ENCODE measurements at regions of chr2 and their contacts with region 1.

Region 1: GRCh38 chr2:60818272-60818671 is 62.2 kb downstream of the PAPOLG start:
- DNase-seq: peak; percentile 80
- H3K4me3 Mint-ChIP-seq: no peak overlapping the region
- H3K27ac Mint-ChIP-seq: peak overlapping the region; percentile 89
- H3K4me1 Mint-ChIP-seq: peaks cover 52% of the 10 kb centered on the region
- H3K27me3 Mint-ChIP-seq: no peaks in the 10 kb centered on the region

Region 2: GRCh38 chr2:60832621-60833020 is 14.3 kb after region 1 on chr2:
- CTCF ChIA-PET with region 1: interaction called, 8 read pairs
- intact Hi-C with region 1: loop called (anchors 1 kb)
- DNase-seq: no peak
- H3K4me3 Mint-ChIP-seq: no peak overlapping the region
- H3K27ac Mint-ChIP-seq: peak overlapping the region; percentile 15
- H3K4me1 Mint-ChIP-seq: peaks cover 42% of the 10 kb centered on the region
- H3K27me3 Mint-ChIP-seq: no peaks in the 10 kb centered on the region

Region 3: GRCh38 chr2:60867848-60868247 is 49.6 kb after region 1 on chr2:
- CTCF ChIA-PET with region 1: interaction called, 5 read pairs
- intact Hi-C with region 1: loop called (anchors 1 kb)
- DNase-seq: peak; percentile 45
- H3K4me3 Mint-ChIP-seq: no peak overlapping the region
- H3K27ac Mint-ChIP-seq: peak overlapping the region; percentile 73
- H3K4me1 Mint-ChIP-seq: peaks cover 32% of the 10 kb centered on the region
- H3K27me3 Mint-ChIP-seq: no peaks in the 10 kb centered on the region

Region 4: GRCh38 chr2:60966507-60967405 is 148.5 kb after region 1 on chr2:
- CTCF ChIA-PET with region 1: interaction called, 5 read pairs
- intact Hi-C with region 1: loop called (anchors 1 kb)
- DNase-seq: no peak
- H3K4me3 Mint-ChIP-seq: peak overlapping the region; percentile 11
- H3K27ac Mint-ChIP-seq: peak overlapping the region; percentile 62
- H3K4me1 Mint-ChIP-seq: peaks cover 62% of the 10 kb centered on the region
- H3K27me3 Mint-ChIP-seq: no peaks in the 10 kb centered on the region

Region 5: DNA sequence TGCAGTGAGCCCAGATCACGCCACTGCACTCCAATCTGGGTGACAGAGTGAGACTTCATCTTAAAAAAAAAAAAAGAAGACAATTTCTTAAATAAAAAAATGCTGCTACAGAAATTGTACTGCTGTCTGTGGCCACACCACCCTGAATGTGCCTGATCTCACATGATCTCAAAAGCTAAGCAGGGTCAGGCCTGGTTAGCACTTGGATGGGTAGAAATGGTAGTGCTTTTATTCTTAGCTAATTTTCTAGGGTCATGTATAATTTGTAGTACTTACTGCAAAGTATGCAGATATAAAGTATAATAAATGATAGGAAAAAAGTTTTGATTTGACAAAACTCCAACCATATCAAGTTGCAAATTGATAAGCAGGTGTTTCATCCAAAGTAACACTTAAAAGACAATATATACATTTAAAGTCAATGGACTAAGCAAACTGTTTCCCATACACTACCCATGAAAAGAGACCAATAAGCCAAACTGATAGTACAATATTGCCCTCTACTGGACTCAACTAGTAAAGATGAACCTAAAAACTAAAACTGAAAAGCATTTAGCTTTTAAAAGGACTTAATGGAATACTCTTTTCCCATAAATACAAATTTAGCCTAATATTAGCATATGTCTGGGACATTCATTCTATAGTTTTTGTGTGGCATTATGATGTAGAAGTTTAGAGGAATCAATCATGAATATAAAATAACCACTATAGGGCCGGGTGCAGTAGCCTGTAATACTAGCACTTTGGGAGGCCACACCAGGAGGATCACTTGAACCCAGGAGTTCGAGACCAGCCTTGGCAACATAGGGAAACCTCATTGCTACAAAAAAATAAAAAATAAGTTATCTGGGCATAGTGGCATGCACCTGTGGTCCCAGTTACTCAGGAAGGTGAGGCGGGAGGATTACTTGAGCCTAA is 180.6 kb after region 1 on chr2:
- CTCF ChIA-PET with region 1: interaction called, 28 read pairs
- intact Hi-C with region 1: loop called (anchors 1 kb)
- DNase-seq: no peak
- H3K4me3 Mint-ChIP-seq: no peak overlapping the region
- H3K27ac Mint-ChIP-seq: no peak overlapping the region
- H3K4me1 Mint-ChIP-seq: no peaks in the 10 kb centered on the region
- H3K27me3 Mint-ChIP-seq: no peaks in the 10 kb centered on the region

Measured in activated naive CD4-positive, alpha-beta T cell treated with anti-CD3 and anti-CD28 coated beads for 36 hours (primary cell).